GM12878 (cell line): ENCODE measurements at regions of chr1 and their contacts with region 1.

Region 1: DNA sequence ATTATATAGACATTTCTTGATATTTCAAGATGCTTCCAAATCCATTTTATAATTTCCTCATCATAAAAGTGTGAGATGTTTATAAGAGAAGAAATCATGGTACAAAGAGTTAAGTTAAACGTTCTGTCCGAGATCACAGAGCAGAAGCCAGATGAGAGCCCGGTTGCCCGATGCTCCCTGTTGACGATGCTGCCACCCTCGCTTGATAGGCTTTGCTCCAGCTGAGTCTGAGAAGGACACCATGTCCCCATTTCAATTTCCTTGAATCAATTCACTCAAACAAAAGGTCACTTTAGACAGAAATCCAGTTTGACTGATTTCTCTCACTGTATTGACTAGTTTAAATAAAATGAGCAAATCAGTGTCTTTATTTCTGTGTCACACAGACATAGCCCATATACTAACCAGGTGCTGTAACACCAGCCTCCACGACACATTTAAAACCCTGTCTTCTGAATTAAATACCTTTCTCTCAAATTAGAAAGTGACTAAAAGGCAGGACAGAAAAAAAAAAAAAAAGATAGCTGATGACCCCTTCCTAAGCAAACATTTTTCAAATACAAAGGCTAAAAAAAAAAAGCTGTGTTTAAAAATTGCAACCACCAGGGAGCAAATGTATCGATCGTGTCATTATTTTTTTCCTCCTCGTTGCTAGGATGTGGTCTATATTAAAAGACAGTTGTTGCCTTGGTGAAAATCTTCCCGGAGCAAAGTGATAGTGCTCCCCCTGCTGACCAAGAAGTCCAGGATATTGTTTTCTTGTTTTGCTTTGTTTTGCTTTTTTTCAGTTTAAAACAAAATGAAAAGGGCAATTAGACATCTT is 35.2 kb downstream of the DNASE2B start:
- DNase-seq: peak; percentile 21
- ATAC-seq: peak; percentile 79
- H3K4me3 ChIP-seq: no peak overlapping the region
- H3K27ac ChIP-seq: no peak overlapping the region
- H3K4me1 ChIP-seq: peaks cover 5% of the 10 kb centered on the region
- H3K27me3 ChIP-seq: no peaks in the 10 kb centered on the region
- CTCF ChIP-seq: peak; percentile 60 to 82 (median 66)
- EP300 ChIP-seq: peak in 1 of 2 experiments; percentile 32; a peak in 1 of 4 replicates
- POLR2A ChIP-seq: no peak
- RAD21 ChIP-seq: peak; percentile 94

Region 2: GRCh38 chr1:83931658-83932253 is 501.7 kb before region 1 on chr1:
- CTCF ChIA-PET with region 1: interaction called, 24 read pairs
- POLR2A ChIA-PET with region 1: no interaction called
- RAD21 ChIA-PET with region 1: interaction called, 6 read pairs
- SMC1A ChIA-PET with region 1: interaction called, 10 read pairs
- in situ Hi-C with region 1: loop called (anchors 10 kb)
- intact Hi-C with region 1: loop called (anchors 5 kb)
- DNase-seq: no peak
- ATAC-seq: peak; percentile 84
- H3K4me3 ChIP-seq: no peak overlapping the region
- H3K27ac ChIP-seq: no peak overlapping the region
- H3K4me1 ChIP-seq: no peaks in the 10 kb centered on the region
- H3K27me3 ChIP-seq: no peaks in the 10 kb centered on the region; a peak in 1 of 4 replicates
- CTCF ChIP-seq: peak; percentile 44 to 70 (median 59); a peak in 5 of 6 replicates
- EP300 ChIP-seq: no peak
- POLR2A ChIP-seq: no peak
- RAD21 ChIP-seq: peak; percentile 92

Region 3: DNA sequence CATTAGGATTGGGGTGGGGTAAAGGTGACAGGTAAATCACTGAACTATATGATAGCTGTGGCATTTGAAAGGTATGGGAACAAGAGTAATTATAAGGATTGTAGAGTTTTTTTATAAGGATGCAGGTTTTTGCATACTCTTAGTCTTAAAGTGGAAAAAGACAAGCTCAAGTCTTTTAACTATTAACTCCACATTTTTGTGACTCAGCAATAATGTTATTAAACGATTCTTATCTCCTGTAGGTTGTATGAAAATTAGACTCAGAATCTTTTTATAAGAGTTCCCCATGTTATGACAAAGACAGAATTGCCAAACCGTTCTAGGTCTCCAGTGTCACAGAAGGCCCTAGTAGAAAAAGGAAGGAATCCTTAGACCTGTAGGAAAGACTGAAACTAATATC is 384.6 kb before region 1 on chr1:
- CTCF ChIA-PET with region 1: no interaction called
- POLR2A ChIA-PET with region 1: no interaction called
- RAD21 ChIA-PET with region 1: no interaction called
- SMC1A ChIA-PET with region 1: no interaction called
- in situ Hi-C with region 1: no loop called
- intact Hi-C with region 1: no loop called
- DNase-seq: no peak
- ATAC-seq: no peak
- H3K4me3 ChIP-seq: no peak overlapping the region
- H3K27ac ChIP-seq: no peak overlapping the region
- H3K4me1 ChIP-seq: no peaks in the 10 kb centered on the region
- H3K27me3 ChIP-seq: no peaks in the 10 kb centered on the region
- CTCF ChIP-seq: no peak
- EP300 ChIP-seq: no peak
- POLR2A ChIP-seq: no peak
- RAD21 ChIP-seq: no peak

Region 4: DNA sequence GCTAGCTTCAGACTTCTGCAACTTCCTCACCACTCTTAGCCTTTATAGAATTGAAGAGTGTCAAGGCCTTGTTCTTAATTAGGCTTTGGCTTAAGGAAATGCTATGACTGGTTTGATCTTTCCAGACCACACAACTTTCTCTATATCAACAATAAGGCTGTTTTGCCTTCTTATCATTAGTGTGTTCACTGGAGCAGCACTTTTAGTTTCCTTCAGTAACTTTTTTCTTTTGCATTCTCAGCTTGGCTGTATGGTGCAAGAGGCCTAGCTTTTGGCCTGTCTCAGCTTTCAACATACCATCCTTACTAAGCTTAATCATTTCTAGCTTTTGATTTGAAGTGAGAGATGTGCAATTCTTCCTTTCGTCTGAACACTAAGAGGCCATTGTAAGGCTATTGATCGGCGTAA is 280.8 kb before region 1 on chr1:
- CTCF ChIA-PET with region 1: no interaction called
- POLR2A ChIA-PET with region 1: no interaction called
- RAD21 ChIA-PET with region 1: no interaction called
- SMC1A ChIA-PET with region 1: interaction called, 4 read pairs
- in situ Hi-C with region 1: loop called (anchors 5 kb)
- intact Hi-C with region 1: no loop called
- DNase-seq: peak; percentile 26
- ATAC-seq: peak; percentile 67
- H3K4me3 ChIP-seq: no peak overlapping the region
- H3K27ac ChIP-seq: no peak overlapping the region
- H3K4me1 ChIP-seq: peaks cover 17% of the 10 kb centered on the region
- H3K27me3 ChIP-seq: no peaks in the 10 kb centered on the region
- CTCF ChIP-seq: no peak
- EP300 ChIP-seq: no peak
- POLR2A ChIP-seq: no peak
- RAD21 ChIP-seq: no peak

Region 5: DNA sequence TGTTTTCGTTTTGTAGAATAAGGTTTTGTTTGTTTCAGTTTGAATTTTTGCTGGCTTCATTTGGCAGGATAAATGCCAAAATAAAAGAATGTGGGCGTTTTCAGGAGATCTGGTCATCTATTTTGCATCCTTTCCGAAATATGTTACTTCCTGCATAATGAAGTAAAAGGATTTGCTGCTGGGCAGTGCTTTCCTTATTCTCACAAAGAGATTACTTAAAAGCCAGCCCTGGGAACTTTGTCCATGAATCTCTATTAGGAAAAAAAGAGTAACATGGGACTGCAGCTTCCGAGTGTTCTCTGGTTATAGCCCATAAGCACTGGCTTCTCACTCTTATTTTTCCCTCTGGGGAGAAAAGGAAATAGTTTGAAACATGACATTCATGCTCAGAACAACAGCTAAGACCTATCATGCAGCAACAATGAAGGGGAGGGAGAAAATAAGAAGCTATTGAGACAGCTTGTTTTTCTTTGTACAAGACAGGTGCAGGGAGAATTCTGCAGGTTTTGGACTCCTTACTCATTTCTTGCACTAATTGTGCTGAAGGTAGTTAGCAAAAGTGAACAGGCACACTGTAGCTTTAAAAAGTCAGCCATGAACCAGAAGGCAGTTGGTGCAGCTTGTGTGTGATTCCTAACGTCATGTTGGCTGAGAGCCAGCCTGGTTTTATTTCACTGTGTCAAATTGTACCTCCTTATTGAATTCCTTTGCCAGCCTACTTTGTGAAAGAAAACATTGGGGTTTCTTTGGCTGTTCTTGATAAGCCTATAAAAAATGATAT is 132.3 kb before region 1 on chr1 and contains the start of gene SAMD13:
- CTCF ChIA-PET with region 1: no interaction called
- POLR2A ChIA-PET with region 1: no interaction called
- RAD21 ChIA-PET with region 1: interaction called, 3 read pairs
- SMC1A ChIA-PET with region 1: no interaction called
- in situ Hi-C with region 1: no loop called
- intact Hi-C with region 1: loop called (anchors 5 kb)
- DNase-seq: peak; percentile 37
- ATAC-seq: no peak
- H3K4me3 ChIP-seq: peak within 1 kb of the TSS; percentile 63
- H3K27ac ChIP-seq: peak within 1 kb of the TSS; percentile 45; the same call in 1 of the 2 replicates
- H3K4me1 ChIP-seq: peaks cover 10% of the 10 kb centered on the region; the same call in 1 of the 2 replicates
- H3K27me3 ChIP-seq: no peaks in the 10 kb centered on the region
- CTCF ChIP-seq: no peak
- EP300 ChIP-seq: no peak
- POLR2A ChIP-seq: no peak
- RAD21 ChIP-seq: no peak
- polyA plus RNA-seq, gene SAMD13: 1.1 to 1.9 TPM

Region 6: DNA sequence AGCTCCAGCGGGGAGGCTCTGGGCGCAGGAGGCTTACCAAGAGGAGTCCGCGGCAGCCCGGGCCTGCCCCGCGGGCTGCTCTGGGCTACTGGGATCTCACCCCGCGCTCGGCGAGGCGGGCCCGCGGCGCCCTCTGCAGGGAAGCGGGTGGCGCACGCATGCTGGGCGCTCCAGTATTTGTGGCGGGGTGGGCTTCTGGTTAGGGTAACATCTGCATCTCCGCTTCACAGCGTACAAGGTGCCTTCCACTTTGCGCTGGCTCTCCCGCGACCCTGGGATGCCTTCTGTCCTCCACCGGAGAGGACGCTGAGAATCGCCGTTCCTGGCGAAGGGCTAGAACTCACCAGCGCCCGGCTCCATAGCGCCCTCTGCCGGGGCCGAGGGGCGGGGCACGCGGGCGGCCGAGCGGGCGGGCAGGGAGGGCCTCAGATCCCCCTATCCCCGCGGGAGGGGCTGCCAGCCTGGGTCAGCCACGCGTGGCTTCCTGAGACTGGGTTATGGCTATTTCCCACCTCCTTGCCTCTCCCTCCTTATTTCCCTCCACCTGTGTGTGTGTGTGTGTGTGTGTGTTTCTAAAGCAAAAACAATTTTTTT is 187.3 kb after region 1 on chr1:
- CTCF ChIA-PET with region 1: interaction called, 13 read pairs
- POLR2A ChIA-PET with region 1: no interaction called
- RAD21 ChIA-PET with region 1: interaction called, 4 read pairs
- SMC1A ChIA-PET with region 1: interaction called, 7 read pairs
- in situ Hi-C with region 1: loop called (anchors 5 kb)
- intact Hi-C with region 1: no loop called
- DNase-seq: peak; percentile 38
- ATAC-seq: peak; percentile 98
- H3K4me3 ChIP-seq: peak overlapping the region; percentile 78
- H3K27ac ChIP-seq: peak overlapping the region; percentile 47
- H3K4me1 ChIP-seq: no peaks in the 10 kb centered on the region
- H3K27me3 ChIP-seq: no peaks in the 10 kb centered on the region; a peak in 1 of 4 replicates
- CTCF ChIP-seq: peak; percentile 64 to 79 (median 73)
- EP300 ChIP-seq: no peak
- POLR2A ChIP-seq: peak; percentile 44
- RAD21 ChIP-seq: peak; percentile 85